Cardiac septum (tissue), 1 donor: ENCODE measurements at regions of chr13 and their contacts with region 1.

Region 1: GRCh38 chr13:34657716-34658115 is 284.4 kb upstream of the NBEA start:
- DNase-seq: no peak

Region 2: DNA sequence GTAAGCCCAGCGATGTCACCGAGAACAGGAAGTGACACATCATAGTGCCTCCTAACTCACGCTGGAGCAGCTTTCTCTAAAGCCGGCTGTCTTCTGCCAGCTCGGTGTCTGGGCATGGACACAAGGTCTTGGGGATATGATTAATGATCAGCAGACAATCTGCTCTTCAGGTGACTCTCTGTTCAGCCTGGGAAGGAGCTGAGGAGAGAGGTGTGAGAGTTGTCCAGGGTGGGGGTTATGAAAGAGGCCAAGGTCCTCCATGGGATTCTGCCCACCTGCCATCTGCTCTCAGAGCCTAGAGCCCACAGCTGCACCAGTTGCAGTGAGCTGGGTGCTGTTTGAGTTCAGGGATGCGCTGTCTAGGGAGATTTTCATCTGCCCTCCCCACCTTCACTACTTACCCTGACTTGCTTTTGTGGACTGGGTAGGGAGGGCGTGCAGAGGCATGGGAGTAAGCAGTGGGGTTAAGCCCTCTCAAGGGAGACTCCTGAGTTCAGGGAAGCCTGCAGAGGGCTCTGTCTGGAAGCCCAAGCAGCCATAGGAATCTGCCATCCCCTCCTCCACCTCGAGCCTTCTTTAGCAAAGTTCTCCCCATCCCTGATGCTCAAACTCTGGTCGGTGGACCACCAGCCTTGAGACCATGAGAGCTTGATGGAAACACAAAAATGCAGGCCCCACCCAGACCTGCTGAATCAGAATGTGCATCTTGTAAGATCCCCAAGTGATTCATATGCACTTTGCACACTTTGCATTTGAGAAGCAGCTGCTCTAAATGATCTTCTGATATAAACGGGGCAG is 300.1 kb before region 1 on chr13:
- intact Hi-C with region 1: loop called (anchors 10 kb)
- DNase-seq: no peak